ENCODE measurements at regions of chr4 and their contacts with region 1.

Region 1: DNA sequence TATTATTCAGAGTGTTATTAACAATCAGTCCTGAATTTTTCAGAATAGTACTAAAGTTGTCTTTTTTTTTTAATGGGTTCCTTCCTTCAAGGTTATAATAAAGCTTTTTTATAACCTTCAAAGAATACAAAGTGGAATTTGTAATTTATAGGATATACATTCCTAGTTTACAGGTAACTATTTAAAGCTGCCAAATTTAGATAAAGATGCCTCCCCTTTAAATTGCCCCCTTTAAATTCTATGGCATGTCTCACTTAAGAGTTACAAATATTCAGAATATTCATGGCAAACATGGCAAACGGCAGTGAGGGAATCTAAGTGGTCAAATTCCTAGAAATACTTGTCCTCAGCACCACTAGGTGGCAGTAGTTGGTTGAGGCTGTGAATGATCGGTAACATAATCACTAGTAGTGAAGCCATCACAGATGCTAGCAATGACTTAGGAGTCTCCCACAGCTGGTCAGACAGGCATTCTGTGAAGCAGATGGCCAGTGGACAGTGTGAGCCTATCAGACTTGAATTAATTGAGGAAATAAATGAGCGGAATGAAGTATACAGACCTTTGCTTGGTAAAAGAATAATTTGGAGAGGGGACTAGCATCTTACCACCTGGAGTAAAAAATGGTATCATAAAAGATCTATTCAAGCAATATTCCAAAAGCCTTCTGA is 86.4 kb downstream of the CBR4 start:
- DNase-seq: peak; percentile 74

Region 2: GRCh38 chr4:168585168-168586091 is 338.2 kb before region 1 on chr4:
- CTCF ChIA-PET with region 1: interaction called, 39 read pairs
- POLR2A ChIA-PET with region 1: no interaction called
- DNase-seq: peak; percentile 78

Region 3: GRCh38 chr4:168874083-168874482 is 49.6 kb before region 1 on chr4:
- CTCF ChIA-PET with region 1: no interaction called
- POLR2A ChIA-PET with region 1: no interaction called
- DNase-seq: no peak

Region 4: DNA sequence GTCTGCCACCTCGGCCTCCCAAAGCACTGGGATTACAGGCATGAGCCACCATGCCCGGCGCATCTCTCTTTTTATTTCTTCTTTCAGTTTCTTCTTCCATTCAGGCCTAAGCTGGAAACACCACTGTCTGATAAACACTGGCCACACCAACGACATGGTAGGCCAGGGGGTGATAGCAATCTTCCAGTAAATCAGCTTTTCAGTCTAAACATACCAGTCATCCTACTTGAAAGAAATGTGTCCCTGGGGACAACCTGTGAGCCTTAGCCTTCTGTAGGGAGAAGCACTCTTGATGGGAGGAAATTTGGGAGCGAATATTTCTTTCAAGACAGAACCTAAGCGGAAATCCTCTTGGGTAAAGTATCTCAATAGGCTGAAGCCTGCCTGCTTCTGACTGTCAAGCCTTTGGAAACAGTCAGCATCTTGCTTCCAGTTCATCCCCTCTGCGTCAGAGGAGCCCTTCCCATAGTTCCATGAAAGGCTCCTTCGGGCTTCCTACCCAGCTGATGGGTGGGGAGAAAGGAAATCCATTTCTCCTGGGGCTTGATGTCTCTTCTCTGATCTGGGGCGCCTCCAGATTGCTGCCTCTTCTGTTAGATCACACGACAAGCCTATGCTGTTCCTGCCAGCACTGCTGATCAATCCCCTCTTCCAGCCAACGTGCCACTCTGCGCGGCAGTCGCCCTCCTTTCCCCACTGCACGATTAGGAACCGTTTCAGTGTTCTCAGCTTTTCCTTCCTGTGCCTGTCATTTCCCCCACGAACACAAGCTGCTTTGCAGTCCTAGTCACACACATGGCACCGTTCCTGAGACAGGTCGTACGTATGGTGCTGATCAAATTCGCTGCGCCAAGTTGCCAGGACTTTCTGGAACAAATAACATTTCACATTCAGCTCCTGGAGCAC is 135.9 kb after region 1 on chr4:
- CTCF ChIA-PET with region 1: no interaction called
- POLR2A ChIA-PET with region 1: no interaction called
- DNase-seq: no peak

Region 5: GRCh38 chr4:169485791-169486742 is 562.4 kb after region 1 on chr4:
- CTCF ChIA-PET with region 1: interaction called, 13 read pairs
- POLR2A ChIA-PET with region 1: no interaction called
- DNase-seq: peak; percentile 51

Measured in HEK293T (cell line).